Spleen (tissue), 13 donors: ENCODE measurements at regions of chr16 and their contacts with region 1.

Region 1: GRCh38 chr16:88437373-88437964 is 15.6 kb upstream of the ZFPM1 start:
- DNase-seq: peak; percentile 90
- H3K4me3 ChIP-seq: no peak overlapping the region
- H3K27ac ChIP-seq: no peak overlapping the region
- H3K4me1 ChIP-seq: peaks cover 0 to 37% (median 16%) of the 10 kb centered on the region in 6 donors
- H3K27me3 ChIP-seq: no peaks in the 10 kb centered on the region
- CTCF ChIP-seq: peak; percentile 70 to 92 (median 87)
- POLR2A ChIP-seq: no peak

Region 2: GRCh38 chr16:88194397-88195268 is 242.8 kb before region 1 on chr16:
- intact Hi-C with region 1: loop called (anchors 10 kb)
- DNase-seq: no peak
- H3K4me3 ChIP-seq: no peak overlapping the region
- H3K27ac ChIP-seq: peak overlapping the region in 1 of 8 donors; percentile 29
- H3K4me1 ChIP-seq: peaks cover 0 to 9% (median 2%) of the 10 kb centered on the region in 6 donors
- H3K27me3 ChIP-seq: no peaks in the 10 kb centered on the region
- CTCF ChIP-seq: no peak
- POLR2A ChIP-seq: no peak

Region 3: GRCh38 chr16:88727871-88728270 is 290.4 kb after region 1 on chr16:
- intact Hi-C with region 1: no loop called
- DNase-seq: no peak
- H3K4me3 ChIP-seq: no peak overlapping the region
- H3K27ac ChIP-seq: no peak overlapping the region
- H3K4me1 ChIP-seq: no peaks in the 10 kb centered on the region
- H3K27me3 ChIP-seq: no peaks in the 10 kb centered on the region
- CTCF ChIP-seq: no peak
- POLR2A ChIP-seq: no peak